Gastrocnemius medialis (tissue), 4 donors: ENCODE measurements at regions of chr17 and their contacts with region 1.

Region 1: GRCh38 chr17:1455797-1456599 is at the start of gene CRK:
- DNase-seq: peak; percentile 94
- ATAC-seq: peak; percentile 74 to 75
- H3K4me3 ChIP-seq: peak within 1 kb of the TSS; percentile 76 to 92 (median 84)
- H3K27ac ChIP-seq: peak within 1 kb of the TSS; percentile 94 to 99 (median 96)
- H3K4me1 ChIP-seq: peaks cover 47 to 52% of the 10 kb centered on the region in 2 donors
- H3K27me3 ChIP-seq: no peaks in the 10 kb centered on the region
- CTCF ChIP-seq: no peak
- POLR2A ChIP-seq: peak; percentile 100
- total RNA-seq, gene CRK: 48.6 to 64.6 (median 56.7) TPM

Region 2: GRCh38 chr17:1365445-1366039 is 90.5 kb before region 1 on chr17:
- in situ Hi-C with region 1: loop called in 1 of 4 experiments (anchors 10 kb)
- intact Hi-C with region 1: loop called (anchors 2 kb)
- DNase-seq: peak; percentile 60 to 66
- ATAC-seq: peak; percentile 76 to 80
- H3K4me3 ChIP-seq: peak overlapping the region in 1 of 4 donors; percentile 15
- H3K27ac ChIP-seq: peak overlapping the region; percentile 74 to 81 (median 76)
- H3K4me1 ChIP-seq: peaks cover 83 to 86% of the 10 kb centered on the region in 2 donors
- H3K27me3 ChIP-seq: no peaks in the 10 kb centered on the region
- CTCF ChIP-seq: peak; percentile 77 to 91 (median 88)
- POLR2A ChIP-seq: no peak

Region 3: DNA sequence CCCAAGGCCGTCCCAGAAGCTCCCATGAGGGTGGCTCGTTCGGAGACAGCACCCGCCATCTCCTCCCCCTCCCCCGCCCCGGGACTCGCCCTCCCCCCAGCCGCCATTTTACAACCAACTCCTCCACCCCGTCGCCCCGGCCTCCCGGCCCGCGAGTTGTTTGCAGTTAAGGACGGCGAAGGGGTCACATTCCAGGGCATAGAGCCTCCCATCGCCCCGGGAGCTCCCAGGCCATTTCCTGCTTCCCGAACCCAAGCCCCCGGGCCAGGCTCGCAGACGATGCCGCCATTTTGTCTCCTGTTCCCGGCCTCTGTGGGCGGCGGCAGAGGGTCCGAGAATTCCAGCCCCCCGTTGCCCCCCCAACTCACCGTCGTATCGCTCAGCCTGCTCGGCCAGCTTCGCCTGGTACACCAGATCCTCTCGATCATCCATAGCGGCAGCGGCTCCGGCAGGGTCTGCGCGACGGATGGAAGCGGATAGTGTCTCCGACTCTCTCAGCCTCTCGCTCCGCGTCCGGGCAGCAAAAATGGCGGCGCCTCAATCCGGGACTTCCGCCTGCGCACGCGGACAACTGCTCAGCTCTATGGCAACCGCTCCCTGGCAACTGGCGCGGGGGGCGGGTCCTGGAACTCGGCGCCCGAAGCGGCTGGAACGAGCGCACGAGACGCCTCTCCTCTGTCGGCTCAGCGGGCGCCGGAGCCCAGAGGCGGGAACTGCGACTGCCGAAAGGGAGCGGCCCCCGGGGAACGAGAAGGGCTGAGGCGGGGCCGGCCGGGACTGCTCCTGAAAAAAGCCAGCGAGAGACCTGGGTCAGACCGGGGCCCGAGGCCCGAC is 56.1 kb before region 1 on chr17 and contains the start of gene YWHAE:
- in situ Hi-C with region 1: loop called in 1 of 4 experiments (anchors 10 kb)
- intact Hi-C with region 1: loop called (anchors 2 kb)
- DNase-seq: peak; percentile 96 to 98
- ATAC-seq: peak; percentile 82 to 83
- H3K4me3 ChIP-seq: peak within 1 kb of the TSS; percentile 82 to 96 (median 92)
- H3K27ac ChIP-seq: peak within 1 kb of the TSS; percentile 96 to 100 (median 98)
- H3K4me1 ChIP-seq: peaks cover 30 to 37% of the 10 kb centered on the region in 2 donors
- H3K27me3 ChIP-seq: no peaks in the 10 kb centered on the region
- CTCF ChIP-seq: no peak
- POLR2A ChIP-seq: peak; percentile 96 to 97
- total RNA-seq, gene YWHAE: 915 to 1,814 (median 1,174) TPM

Region 4: GRCh38 chr17:1422907-1423306 is 33.1 kb before region 1 on chr17:
- in situ Hi-C with region 1: no loop called
- intact Hi-C with region 1: loop called (anchors 5 kb)
- DNase-seq: peak; percentile 80 to 87
- ATAC-seq: peak; percentile 97 to 99
- H3K4me3 ChIP-seq: peak overlapping the region in 1 of 4 donors; percentile 32
- H3K27ac ChIP-seq: peak overlapping the region; percentile 89 to 97 (median 93)
- H3K4me1 ChIP-seq: peaks cover 32 to 34% of the 10 kb centered on the region in 2 donors
- H3K27me3 ChIP-seq: no peaks in the 10 kb centered on the region
- CTCF ChIP-seq: peak in 1 of 5 experiments; percentile 11
- POLR2A ChIP-seq: peak; percentile 41 to 73

Region 5: GRCh38 chr17:1484676-1485421 is 28.9 kb after region 1 on chr17:
- in situ Hi-C with region 1: no loop called
- intact Hi-C with region 1: loop called (anchors 2 kb)
- DNase-seq: peak in 1 of 2 donors; percentile 56
- ATAC-seq: peak; percentile 20 to 28
- H3K4me3 ChIP-seq: peak overlapping the region; percentile 69 to 74 (median 72)
- H3K27ac ChIP-seq: peak overlapping the region; percentile 83 to 92 (median 90)
- H3K4me1 ChIP-seq: peaks cover 28 to 34% of the 10 kb centered on the region in 2 donors
- H3K27me3 ChIP-seq: no peaks in the 10 kb centered on the region
- CTCF ChIP-seq: peak in 2 of 5 experiments; percentile 11 to 17
- POLR2A ChIP-seq: no peak

Region 6: GRCh38 chr17:1529863-1530262 is 73.9 kb after region 1 on chr17:
- in situ Hi-C with region 1: no loop called
- intact Hi-C with region 1: no loop called
- DNase-seq: no peak
- ATAC-seq: no peak
- H3K4me3 ChIP-seq: no peak overlapping the region
- H3K27ac ChIP-seq: no peak overlapping the region
- H3K4me1 ChIP-seq: peaks cover 8 to 18% of the 10 kb centered on the region in 2 donors
- H3K27me3 ChIP-seq: no peaks in the 10 kb centered on the region
- CTCF ChIP-seq: no peak
- POLR2A ChIP-seq: no peak

Region 7: DNA sequence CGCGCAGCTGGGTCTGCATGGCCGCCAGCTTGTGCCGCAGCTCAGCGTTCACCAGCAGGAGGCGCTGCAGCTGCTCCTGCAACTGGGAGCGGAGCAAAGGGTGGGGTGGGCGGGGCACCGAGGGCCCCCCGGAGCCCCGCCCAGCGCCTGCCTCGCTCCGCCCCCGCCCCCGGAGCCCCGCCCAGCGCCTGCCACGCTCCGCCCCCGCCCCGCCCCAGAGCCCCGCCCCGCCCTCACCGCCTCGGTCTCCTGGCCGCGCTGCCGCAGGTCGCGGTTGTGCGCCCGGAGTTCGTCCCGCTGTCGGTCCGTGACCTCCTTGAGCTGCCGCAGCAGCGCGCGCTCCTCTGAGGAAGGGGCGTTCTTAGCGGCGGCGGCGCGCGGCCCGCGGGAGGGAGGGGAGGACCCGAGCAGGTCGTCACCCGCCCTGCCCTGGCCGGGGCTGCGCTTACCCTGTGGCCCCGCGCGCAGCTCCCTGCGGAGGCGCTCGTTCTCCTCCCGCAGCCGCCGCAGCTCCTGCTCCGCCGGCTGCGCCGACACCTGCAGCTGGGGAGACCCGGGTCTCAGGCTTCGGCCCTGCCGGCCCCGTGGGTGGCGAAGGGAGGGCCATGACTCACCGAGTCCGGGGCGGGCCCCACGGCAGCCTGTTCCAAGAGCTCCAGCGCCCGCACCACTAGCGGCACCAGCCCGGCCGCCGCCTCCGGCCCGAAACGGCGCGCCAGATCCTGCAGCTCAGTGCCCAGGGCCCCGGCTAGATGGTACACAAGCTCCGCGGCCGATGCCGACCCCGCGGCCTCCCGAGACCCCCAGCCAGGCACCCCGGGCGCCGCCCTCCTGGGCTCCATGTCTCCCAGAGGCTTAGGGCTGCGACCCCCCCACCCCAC is 193.2 kb after region 1 on chr17:
- in situ Hi-C with region 1: no loop called
- intact Hi-C with region 1: loop called (anchors 10 kb)
- DNase-seq: peak; percentile 86 to 94
- ATAC-seq: peak; percentile 55 to 66
- H3K4me3 ChIP-seq: peak overlapping the region; percentile 64 to 96 (median 80)
- H3K27ac ChIP-seq: peak overlapping the region; percentile 95 to 100 (median 99)
- H3K4me1 ChIP-seq: peaks cover 33 to 36% of the 10 kb centered on the region in 2 donors
- H3K27me3 ChIP-seq: no peaks in the 10 kb centered on the region
- CTCF ChIP-seq: peak in 2 of 5 experiments; percentile 88 to 98
- POLR2A ChIP-seq: peak; percentile 84 to 86